Heart left ventricle (tissue), 16 donors: ENCODE measurements at regions of chr11 and their contacts with region 1.

Region 1: GRCh38 chr11:32052218-32052617 is 38.7 kb upstream of the RCN1 start:
- DNase-seq: peak in 3 of 5 donors; percentile 39 to 42 (median 42)
- ATAC-seq: peak in 1 of 4 donors; percentile 63
- H3K4me3 ChIP-seq: no peak overlapping the region
- H3K27ac ChIP-seq: no peak overlapping the region
- H3K4me1 ChIP-seq: peaks cover 0 to 3% (median 0%) of the 10 kb centered on the region in 12 donors
- H3K27me3 ChIP-seq: peaks cover 0 to 27% (median 4%) of the 10 kb centered on the region in 9 donors
- CTCF ChIP-seq: peak; percentile 74 to 88 (median 80)
- POLR2A ChIP-seq: no peak

Region 2: GRCh38 chr11:31932879-31933278 is 119.3 kb before region 1 on chr11:
- intact Hi-C with region 1: no loop called
- DNase-seq: no peak
- ATAC-seq: peak in 3 of 4 donors; percentile 63 to 75 (median 68)
- H3K4me3 ChIP-seq: no peak overlapping the region
- H3K27ac ChIP-seq: no peak overlapping the region
- H3K4me1 ChIP-seq: peaks cover 0 to 5% (median 0%) of the 10 kb centered on the region in 12 donors
- H3K27me3 ChIP-seq: peaks cover 0 to 16% (median 0%) of the 10 kb centered on the region in 9 donors
- CTCF ChIP-seq: no peak
- POLR2A ChIP-seq: no peak

Region 3: DNA sequence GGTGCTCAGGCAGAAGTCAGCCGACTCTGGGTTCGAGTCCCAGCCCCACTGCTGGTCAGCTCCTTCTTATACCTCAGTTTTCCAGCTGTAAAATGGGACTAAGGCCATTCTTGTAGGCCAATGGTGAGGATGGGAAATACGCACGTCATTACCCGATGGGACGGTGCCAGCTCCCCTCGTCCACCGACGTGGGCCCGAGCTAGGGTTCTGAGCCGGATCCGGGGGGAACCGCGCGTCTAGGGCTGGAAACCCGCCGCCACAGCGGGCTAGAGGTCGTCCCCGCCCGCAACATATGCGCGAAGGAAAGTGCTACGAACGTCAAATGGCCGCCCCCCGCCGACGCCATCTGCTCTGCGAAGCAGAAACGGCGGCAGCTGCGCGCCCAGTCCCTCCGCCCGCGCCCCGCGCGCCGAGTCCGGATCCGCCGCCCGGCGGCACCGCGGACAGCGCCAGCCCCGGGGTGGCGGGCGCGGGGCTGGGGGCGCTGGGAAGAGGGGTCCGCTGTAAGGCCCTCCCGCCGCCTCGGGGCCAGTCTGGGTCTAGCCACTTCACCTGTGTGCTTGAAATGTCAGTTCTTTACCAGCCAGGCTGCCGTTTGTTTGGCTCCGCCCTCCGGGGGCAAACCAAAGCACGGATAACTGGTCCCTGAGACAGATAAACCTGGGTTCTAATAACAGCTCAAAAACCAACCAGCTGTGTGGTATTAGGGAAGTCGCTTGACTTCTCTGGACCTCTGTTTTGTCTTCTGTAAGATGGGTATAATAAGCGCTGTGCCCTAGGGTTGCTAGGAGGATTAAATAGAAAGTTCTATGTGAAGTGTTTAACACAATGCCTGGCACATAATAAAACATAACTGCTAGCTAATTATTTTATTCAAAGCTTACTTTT is 64.9 kb before region 1 on chr11:
- intact Hi-C with region 1: no loop called
- DNase-seq: no peak
- ATAC-seq: no peak
- H3K4me3 ChIP-seq: peak overlapping the region in 3 of 12 donors; percentile 4 to 22 (median 11)
- H3K27ac ChIP-seq: no peak overlapping the region
- H3K4me1 ChIP-seq: peaks cover 0 to 5% (median 0%) of the 10 kb centered on the region in 12 donors
- H3K27me3 ChIP-seq: peaks cover 18 to 50% (median 25%) of the 10 kb centered on the region in 9 donors
- CTCF ChIP-seq: no peak
- POLR2A ChIP-seq: no peak

Region 4: DNA sequence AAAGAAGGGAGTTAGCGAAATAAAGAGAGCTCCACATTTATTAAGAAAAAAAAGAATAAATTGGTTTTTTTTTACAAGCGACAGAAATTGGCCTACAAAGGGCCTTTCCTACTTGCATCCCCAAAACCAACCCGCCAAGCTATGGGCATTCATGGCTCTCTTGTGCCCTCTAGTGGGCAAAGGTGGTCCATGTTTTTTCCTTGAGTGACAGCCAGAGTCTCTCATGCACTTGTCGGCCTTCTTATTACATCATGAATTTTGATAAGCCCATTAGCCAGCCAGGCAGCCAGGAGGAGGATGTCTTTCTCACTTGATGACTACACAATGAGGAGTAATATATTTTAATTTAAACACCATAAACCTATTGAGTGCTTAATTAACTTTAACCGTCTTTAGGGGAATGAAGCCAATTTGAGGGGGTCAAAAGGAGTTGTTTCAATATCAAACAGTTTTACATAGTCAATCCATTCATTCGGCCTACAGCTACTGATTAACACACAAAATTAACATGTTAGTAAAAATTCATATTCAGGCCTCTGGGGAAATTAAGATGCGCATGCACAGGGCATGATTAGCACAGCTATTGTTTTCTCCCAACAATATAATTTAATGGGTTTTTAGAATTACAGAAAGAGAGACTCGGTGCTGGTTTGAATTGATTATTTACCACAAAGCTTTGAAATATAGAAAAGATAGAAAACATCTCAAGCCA is 124.2 kb after region 1 on chr11:
- intact Hi-C with region 1: loop called (anchors 1 to 2 kb)
- DNase-seq: peak in 4 of 5 donors; percentile 54 to 70 (median 66)
- ATAC-seq: peak in 3 of 4 donors; percentile 62 to 78 (median 74)
- H3K4me3 ChIP-seq: no peak overlapping the region
- H3K27ac ChIP-seq: no peak overlapping the region
- H3K4me1 ChIP-seq: peaks cover 0 to 9% (median 0%) of the 10 kb centered on the region in 12 donors
- H3K27me3 ChIP-seq: peaks cover 0 to 7% (median 0%) of the 10 kb centered on the region in 9 donors
- CTCF ChIP-seq: peak; percentile 82 to 96 (median 88)
- POLR2A ChIP-seq: no peak

Region 5: DNA sequence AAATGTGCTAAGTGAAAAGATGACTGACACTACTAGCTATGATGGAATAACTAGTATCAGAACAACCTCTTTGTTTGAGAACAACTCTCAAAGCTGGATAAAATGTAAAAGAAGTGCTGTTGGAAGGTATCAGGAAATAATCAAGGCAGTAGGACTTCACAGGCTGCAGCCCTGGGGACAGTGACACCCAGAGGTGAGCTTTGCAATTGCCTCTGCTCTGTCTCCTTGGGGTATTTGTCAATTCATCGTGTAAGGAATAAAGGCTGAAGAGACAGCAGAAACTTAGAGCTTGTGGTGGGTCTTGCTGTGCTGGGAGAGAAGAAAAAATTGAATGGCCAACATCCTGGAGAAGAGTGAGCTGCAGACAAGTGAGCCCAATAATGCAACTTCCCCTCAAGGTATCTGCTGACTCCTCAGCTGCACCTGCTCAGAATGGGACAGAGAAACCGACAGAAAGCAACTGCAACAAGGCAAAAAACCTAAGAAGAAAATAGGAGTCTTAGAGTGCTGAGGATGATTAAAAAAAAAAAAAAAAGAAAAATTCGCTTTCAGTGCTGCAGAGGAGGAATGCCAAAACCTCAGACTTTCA is 179.8 kb after region 1 on chr11:
- intact Hi-C with region 1: no loop called
- DNase-seq: no peak
- ATAC-seq: no peak
- H3K4me3 ChIP-seq: no peak overlapping the region
- H3K27ac ChIP-seq: no peak overlapping the region
- H3K4me1 ChIP-seq: no peaks in the 10 kb centered on the region
- H3K27me3 ChIP-seq: peaks cover 0 to 6% (median 0%) of the 10 kb centered on the region in 9 donors
- CTCF ChIP-seq: peak in 8 of 12 donors; percentile 9 to 40 (median 27)
- POLR2A ChIP-seq: no peak

Region 6: DNA sequence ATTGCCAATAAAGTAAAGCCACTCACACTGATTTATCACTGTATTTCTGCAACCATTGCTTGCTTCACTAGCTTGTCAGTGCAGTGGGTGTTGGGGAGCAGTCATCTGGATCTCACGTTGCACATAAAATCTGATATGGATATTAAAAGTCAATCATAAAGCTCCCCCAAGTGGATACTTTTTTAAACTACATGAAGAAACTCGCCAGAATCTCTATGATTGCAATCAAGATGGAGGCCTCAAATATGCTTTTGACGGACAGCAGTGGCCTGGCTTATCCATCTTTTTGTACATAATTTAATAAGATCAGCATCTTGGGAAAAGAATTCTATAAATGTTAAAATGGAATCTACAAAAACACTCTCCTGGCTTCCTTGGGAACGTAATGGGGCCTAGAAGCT is 245.4 kb after region 1 on chr11:
- intact Hi-C with region 1: loop called in 1 of 10 experiments (anchors 5 kb)
- DNase-seq: no peak
- ATAC-seq: no peak
- H3K4me3 ChIP-seq: no peak overlapping the region
- H3K27ac ChIP-seq: no peak overlapping the region
- H3K4me1 ChIP-seq: no peaks in the 10 kb centered on the region
- H3K27me3 ChIP-seq: peaks cover 0 to 15% (median 0%) of the 10 kb centered on the region in 9 donors
- CTCF ChIP-seq: peak in 6 of 12 donors; percentile 8 to 25 (median 18)
- POLR2A ChIP-seq: no peak